ENCODE measurements at regions of chr14 and their contacts with region 1.

Region 1: DNA sequence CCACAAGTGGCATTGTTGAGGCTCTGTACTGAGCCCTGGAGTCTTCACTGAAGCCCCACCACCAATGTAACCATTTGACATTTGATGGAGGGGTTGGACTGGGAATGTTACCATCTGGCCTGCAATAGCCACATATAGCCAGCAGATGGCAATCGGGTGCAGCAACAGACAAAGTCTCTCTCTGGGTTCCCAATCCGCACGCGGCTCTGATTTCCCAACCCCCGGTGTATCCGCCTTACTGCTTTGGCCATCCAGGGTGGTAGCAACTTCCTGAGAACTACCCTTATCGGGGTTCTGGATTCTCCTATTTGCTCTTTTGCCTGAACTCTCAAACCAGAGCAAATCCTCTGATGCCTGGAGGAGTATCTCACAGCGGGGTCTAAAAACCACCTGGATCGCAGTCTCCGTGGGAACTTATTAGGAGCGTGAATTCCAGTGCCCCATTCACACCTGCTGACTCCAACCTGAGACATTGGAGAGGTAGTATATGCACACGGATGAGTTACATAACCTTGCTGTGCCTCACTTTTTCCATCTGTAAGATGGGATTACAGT is 14.2 kb downstream of the VRTN start:
- DNase-seq: peak; percentile 54 to 78
- ATAC-seq: peak; percentile 76 to 86 (median 81)
- H3K4me3 ChIP-seq: no peak overlapping the region
- H3K4me3 Mint-ChIP-seq: no peak overlapping the region
- H3K27ac ChIP-seq: no peak overlapping the region
- H3K27ac Mint-ChIP-seq: peak overlapping the region in 1 of 2 donors; percentile 2
- H3K4me1 ChIP-seq: peaks cover 3% of the 10 kb centered on the region
- H3K4me1 Mint-ChIP-seq: peaks cover 5% of the 10 kb centered on the region in 2 donors
- H3K27me3 ChIP-seq: no peaks in the 10 kb centered on the region
- H3K27me3 Mint-ChIP-seq: peaks cover 10 to 20% of the 10 kb centered on the region in 2 donors
- CTCF ChIP-seq: peak; percentile 91

Region 2: DNA sequence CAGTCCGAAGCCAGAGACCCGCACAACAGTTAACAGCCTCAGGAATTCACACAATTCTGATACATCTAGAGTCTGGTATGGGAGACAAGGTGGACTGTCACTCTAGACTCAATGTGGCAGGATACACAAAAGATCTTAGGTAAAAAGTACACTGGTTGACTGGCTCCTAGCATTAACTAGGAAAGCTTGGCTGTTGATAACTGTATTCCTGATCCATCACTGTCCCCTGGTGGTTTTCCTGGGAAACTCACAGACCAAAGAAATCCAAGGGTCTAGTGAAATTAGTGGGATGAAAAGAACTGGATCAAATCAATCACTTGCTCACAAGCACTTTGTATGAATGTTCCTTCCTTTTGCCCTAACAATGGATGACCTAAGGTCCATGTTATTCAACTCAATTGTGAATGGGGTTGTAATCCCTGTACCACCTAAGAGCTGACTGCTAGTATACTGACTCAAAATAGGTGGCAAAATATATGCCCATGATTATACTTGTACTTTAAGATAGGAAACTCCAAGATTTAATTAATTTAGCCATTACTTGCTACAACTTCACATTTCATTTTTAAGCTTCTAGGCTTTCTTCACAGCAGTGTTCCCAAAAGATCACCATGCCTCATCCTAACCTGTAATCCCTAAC is 116.7 kb after region 1 on chr14:
- intact Hi-C with region 1: loop called (anchors 1 kb)
- DNase-seq: peak in 1 of 2 donors; percentile 17
- ATAC-seq: no peak
- H3K4me3 ChIP-seq: no peak overlapping the region
- H3K4me3 Mint-ChIP-seq: no peak overlapping the region
- H3K27ac ChIP-seq: no peak overlapping the region
- H3K27ac Mint-ChIP-seq: no peak overlapping the region
- H3K4me1 ChIP-seq: no peaks in the 10 kb centered on the region
- H3K4me1 Mint-ChIP-seq: no peaks in the 10 kb centered on the region
- H3K27me3 ChIP-seq: no peaks in the 10 kb centered on the region
- H3K27me3 Mint-ChIP-seq: no peaks in the 10 kb centered on the region
- CTCF ChIP-seq: no peak

Region 3: DNA sequence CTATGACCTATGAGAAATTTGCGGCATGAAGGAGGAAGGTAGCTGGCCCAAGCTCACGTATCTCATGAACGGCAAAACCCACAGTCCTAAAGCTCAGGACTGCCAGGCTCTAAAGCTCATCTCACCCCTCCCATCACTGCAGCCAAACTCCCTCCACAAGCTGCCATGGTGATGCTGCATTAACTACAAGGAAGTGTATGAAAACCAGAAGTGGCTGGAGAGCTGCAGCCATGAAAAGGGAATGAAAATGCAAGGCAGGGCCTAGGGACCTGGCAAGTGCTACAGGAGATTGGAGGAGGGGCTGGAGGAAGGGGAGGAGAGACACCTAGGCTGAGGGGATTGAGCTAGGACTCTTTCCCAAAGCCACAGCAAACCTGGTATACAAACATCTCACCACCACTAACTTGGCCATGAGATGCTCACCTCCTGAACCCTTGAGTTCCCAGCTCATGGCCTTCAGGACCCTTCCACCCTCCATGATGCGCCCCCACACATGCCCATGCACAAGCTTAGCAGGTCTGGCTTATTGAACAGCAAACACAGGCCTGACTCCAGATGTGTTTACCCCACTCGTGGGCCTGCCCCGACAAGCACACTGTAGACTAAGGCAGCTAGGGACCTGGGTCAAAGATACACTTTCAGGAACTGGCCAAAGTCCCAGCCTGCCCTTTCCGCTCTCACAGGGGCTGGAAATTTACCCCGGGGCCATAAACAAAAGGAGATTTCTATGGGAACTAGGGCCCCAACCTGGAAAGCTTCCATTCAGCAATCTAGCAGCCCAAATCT is 207.6 kb after region 1 on chr14:
- intact Hi-C with region 1: no loop called
- DNase-seq: no peak
- ATAC-seq: no peak
- H3K4me3 ChIP-seq: no peak overlapping the region
- H3K4me3 Mint-ChIP-seq: no peak overlapping the region
- H3K27ac ChIP-seq: no peak overlapping the region
- H3K27ac Mint-ChIP-seq: no peak overlapping the region
- H3K4me1 ChIP-seq: peaks cover 40% of the 10 kb centered on the region
- H3K4me1 Mint-ChIP-seq: peaks cover 32 to 38% of the 10 kb centered on the region in 2 donors
- H3K27me3 ChIP-seq: peaks cover 46% of the 10 kb centered on the region
- H3K27me3 Mint-ChIP-seq: peaks cover 75 to 79% of the 10 kb centered on the region in 2 donors
- CTCF ChIP-seq: no peak

Region 4: GRCh38 chr14:74804219-74804826 is 441.9 kb after region 1 on chr14:
- intact Hi-C with region 1: loop called (anchors 10 kb)
- DNase-seq: peak in 1 of 2 donors; percentile 52
- ATAC-seq: peak; percentile 50 to 79 (median 71)
- H3K4me3 ChIP-seq: no peak overlapping the region
- H3K4me3 Mint-ChIP-seq: no peak overlapping the region
- H3K27ac ChIP-seq: no peak overlapping the region
- H3K27ac Mint-ChIP-seq: peak overlapping the region in 1 of 2 donors; percentile 0
- H3K4me1 ChIP-seq: no peaks in the 10 kb centered on the region
- H3K4me1 Mint-ChIP-seq: peaks cover 0 to 5% of the 10 kb centered on the region in 2 donors
- H3K27me3 ChIP-seq: no peaks in the 10 kb centered on the region
- H3K27me3 Mint-ChIP-seq: no peaks in the 10 kb centered on the region
- CTCF ChIP-seq: peak; percentile 65

Measured in natural killer cell (primary cell).